Transverse colon (tissue), 4 donors: ENCODE measurements at regions of chr6 and their contacts with region 1.

Region 1: DNA sequence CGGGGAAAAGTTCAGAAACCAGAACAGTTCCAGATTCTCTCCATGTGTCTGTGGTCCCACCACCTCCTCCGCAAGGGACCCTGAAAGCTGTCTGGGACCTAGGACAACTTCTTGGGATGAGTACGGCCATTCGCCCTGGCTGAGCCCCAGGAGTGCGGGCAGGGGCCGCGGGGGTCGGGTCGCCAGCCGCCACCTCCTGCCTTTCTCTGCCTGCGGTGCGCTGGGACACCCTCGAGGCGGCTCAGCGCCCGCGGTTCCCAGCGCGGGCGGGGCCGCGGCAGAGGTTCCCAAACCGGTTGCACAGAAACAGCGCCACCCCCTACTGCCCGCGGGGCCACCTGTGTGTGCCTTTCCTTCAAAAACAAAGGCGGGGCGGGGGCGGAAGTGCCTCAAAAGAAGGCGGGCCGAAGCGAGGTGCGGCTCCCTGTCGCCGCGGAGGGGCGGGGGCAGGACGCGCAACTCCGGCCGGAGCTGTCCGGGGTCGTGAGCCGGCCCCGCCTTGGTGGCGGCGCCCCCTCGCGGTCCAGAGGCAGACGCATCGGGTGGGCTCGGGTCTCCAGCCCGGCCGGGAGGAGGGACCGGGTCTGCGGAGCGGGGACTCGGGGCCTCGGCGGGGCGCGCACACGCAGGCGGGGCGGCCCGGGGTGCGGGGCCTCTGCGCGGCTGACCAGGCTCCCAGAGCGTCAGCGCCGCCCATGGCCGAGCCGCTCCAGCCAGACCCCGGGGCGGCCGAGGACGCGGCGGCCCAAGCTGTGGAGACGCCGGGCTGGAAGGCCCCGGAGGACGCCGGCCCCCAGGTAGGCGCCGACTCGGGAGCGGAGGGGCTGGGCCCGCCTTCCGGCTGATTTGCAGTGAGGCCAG is at the start of gene HEBP2:
- DNase-seq: peak; percentile 97
- H3K4me3 ChIP-seq: peak within 1 kb of the TSS; percentile 66 to 86 (median 82)
- H3K27ac ChIP-seq: peak within 1 kb of the TSS; percentile 94 to 97 (median 95)
- H3K4me1 ChIP-seq: peaks cover 0 to 19% (median 14%) of the 10 kb centered on the region in 4 donors
- H3K27me3 ChIP-seq: no peaks in the 10 kb centered on the region
- CTCF ChIP-seq: peak in 4 of 5 experiments; percentile 38 to 49 (median 42)
- EP300 ChIP-seq: no peak
- POLR2A ChIP-seq: peak; percentile 89
- total RNA-seq, gene HEBP2: 33.3 to 77.8 (median 73.4) TPM

Region 2: DNA sequence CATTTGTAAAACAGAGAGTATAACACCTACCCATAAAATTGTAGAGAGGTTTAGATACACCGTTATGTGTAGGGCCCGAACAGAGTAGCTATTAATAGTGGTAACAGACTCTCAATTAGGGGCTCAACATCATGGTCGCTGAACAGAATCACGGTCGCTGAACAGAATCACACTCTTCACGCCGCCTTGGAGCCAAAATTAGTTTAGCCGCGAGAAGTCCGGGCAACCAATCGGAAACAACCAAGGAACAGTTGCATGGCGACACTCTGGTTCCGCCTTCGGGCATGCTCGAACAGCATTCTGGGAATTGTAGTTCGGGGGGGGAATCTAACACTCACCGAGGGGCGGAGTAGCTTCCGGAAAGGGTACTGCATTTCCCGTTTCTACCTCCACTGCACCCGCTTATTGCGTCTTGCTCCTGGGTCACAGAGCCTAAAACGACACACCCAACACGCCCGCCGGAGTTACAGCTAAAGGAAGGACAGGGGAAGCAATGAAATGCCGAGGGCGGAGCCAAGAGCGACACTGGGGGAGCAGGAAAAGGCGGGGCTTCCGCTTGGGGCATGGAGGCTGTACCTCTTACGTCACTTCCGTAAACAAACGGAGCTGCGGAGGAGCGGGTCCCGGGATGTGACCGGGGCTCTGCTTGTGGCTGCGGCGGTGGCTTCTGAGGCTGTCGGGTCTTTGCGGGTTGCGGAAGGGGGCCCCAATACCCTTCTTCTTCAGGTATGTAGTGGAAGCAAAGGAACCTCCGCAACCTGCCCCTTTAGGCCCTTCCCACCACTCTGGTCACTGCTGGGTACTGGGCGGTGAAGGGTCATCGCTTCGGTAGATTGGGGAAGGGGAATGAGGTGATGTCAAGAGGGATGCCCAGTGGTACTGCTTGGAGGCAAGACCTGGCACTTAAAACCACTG is 369.4 kb after region 1 on chr6 and contains the start of gene CCDC28A:
- in situ Hi-C with region 1: loop called in 2 of 4 experiments (anchors 25 kb)
- intact Hi-C with region 1: no loop called
- DNase-seq: peak; percentile 94
- H3K4me3 ChIP-seq: peak within 1 kb of the TSS; percentile 65 to 75 (median 69)
- H3K27ac ChIP-seq: peak within 1 kb of the TSS; percentile 89 to 96 (median 93)
- H3K4me1 ChIP-seq: peaks cover 0 to 19% (median 13%) of the 10 kb centered on the region in 4 donors
- H3K27me3 ChIP-seq: no peaks in the 10 kb centered on the region
- CTCF ChIP-seq: peak in 2 of 5 experiments; percentile 36
- EP300 ChIP-seq: no peak
- POLR2A ChIP-seq: peak; percentile 70
- total RNA-seq, gene CCDC28A: 12.0 to 31.4 (median 19.6) TPM